ENCODE measurements at regions of chr11 and their contacts with region 1.

Region 1: DNA sequence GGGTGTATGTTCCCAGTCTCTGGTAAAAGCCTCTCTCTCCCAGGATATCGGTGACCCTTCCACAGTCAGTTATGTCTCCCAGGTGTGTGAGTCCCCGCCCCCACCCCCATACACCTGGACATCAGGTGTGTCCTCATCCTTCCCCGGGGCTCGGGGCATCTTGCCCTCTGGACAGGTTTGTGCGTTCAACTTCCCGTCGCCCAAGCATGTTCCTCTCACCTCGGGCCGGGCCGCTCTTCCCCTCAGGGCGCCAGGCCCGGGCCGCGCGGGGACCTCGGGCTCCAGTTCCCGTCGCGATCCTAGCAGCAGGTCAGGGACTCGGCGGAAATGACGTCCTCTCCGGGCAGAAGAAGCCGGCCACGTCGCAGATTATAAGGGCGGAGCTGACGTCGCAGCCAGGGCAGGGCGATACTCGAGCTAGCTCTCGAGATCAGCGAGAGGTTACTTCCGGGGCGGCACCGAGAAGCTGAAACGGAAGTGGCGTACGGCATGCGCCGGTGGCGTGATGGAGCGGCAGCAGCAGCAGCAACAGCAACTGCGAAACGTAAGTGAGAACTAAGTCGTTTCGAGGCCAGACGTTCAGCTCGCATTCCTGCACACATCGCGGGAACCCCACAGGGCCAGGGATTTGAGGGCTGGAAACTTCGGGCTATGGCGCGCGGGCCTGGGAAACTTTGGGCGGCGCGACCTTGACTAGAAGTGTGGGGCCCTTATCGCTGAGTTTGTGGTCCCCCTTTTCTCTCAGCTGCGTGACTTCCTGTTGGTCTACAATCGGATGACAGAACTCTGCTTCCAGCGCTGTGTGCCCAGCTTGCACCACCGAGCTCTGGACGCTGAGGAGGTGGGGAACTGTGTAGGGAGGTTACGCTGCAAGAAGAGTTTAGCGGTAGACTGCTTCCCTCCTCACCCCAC is at the starts of genes ARFIP2 and TIMM10B:
- DNase-seq: peak; percentile 92 to 99 (median 96)
- ATAC-seq: peak; percentile 94
- H3K4me3 ChIP-seq: peak within 1 kb of the TSS; percentile 83
- H3K4me3 Mint-ChIP-seq: peak within 1 kb of the TSS; percentile 98
- H3K27ac ChIP-seq: peak within 1 kb of the TSS; percentile 87 to 95
- H3K27ac Mint-ChIP-seq: peak within 1 kb of the TSS; percentile 99
- H3K4me1 ChIP-seq: peaks cover 39% of the 10 kb centered on the region
- H3K4me1 Mint-ChIP-seq: peaks cover 42% of the 10 kb centered on the region
- H3K27me3 ChIP-seq: no peaks in the 10 kb centered on the region
- H3K27me3 Mint-ChIP-seq: no peaks in the 10 kb centered on the region
- CTCF ChIP-seq: no peak
- total RNA-seq, gene ARFIP2: 78.1 to 80.5 TPM
- total RNA-seq, gene TIMM10B: 68.5 to 68.6 TPM

Region 2: DNA sequence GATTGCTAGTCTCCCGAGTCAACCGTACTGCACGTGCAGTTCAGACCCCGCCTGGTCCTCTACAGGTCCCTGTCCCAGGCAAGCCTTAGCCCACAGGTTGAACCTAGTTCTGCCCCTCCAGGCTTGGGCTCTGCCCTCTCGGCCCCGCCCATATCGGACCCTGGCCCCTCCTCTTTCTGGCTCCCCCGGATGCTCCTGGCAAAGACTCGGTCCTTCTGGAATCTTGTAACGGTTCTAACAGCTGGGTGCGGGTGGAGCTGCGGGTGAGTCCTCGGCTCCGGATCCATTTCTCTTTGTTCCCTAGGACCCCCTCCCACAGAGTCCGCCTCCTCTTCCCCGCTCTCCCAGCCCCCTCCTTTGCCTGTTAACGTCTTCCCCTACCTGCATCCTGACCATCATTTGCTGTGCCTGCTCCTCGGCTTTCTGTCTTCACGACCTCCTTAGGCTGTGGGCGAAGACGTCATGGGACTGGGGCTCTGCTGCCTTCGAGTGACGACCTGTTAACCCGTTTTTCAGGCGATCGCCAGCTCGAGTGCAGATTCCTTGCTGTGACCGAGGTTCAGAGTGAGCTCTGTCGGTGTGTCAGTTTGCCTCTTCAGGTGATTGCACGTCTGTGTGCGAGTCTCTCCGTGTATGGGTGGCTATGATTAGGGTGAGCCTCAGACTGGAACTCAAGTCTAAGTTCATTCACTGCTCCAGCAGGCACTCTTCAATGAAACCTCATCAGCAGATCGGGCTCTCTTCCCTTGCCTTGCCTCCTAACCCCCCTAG is 16.0 kb after region 1 on chr11 and contains the start of gene DNHD1:
- CTCF ChIA-PET with region 1: no interaction called
- POLR2A ChIA-PET with region 1: interaction called, 10 read pairs
- intact Hi-C with region 1: no loop called
- DNase-seq: no peak
- ATAC-seq: no peak
- H3K4me3 ChIP-seq: no peak within 1 kb of the TSS
- H3K4me3 Mint-ChIP-seq: no peak within 1 kb of the TSS
- H3K27ac ChIP-seq: no peak within 1 kb of the TSS
- H3K27ac Mint-ChIP-seq: no peak within 1 kb of the TSS
- H3K4me1 ChIP-seq: no peaks in the 10 kb centered on the region
- H3K4me1 Mint-ChIP-seq: peaks cover 30% of the 10 kb centered on the region
- H3K27me3 ChIP-seq: no peaks in the 10 kb centered on the region
- H3K27me3 Mint-ChIP-seq: no peaks in the 10 kb centered on the region
- CTCF ChIP-seq: no peak
- total RNA-seq, gene DNHD1: 44.1 to 46.8 TPM